ENCODE measurements at regions of chr2 and their contacts with region 1.

Region 1: DNA sequence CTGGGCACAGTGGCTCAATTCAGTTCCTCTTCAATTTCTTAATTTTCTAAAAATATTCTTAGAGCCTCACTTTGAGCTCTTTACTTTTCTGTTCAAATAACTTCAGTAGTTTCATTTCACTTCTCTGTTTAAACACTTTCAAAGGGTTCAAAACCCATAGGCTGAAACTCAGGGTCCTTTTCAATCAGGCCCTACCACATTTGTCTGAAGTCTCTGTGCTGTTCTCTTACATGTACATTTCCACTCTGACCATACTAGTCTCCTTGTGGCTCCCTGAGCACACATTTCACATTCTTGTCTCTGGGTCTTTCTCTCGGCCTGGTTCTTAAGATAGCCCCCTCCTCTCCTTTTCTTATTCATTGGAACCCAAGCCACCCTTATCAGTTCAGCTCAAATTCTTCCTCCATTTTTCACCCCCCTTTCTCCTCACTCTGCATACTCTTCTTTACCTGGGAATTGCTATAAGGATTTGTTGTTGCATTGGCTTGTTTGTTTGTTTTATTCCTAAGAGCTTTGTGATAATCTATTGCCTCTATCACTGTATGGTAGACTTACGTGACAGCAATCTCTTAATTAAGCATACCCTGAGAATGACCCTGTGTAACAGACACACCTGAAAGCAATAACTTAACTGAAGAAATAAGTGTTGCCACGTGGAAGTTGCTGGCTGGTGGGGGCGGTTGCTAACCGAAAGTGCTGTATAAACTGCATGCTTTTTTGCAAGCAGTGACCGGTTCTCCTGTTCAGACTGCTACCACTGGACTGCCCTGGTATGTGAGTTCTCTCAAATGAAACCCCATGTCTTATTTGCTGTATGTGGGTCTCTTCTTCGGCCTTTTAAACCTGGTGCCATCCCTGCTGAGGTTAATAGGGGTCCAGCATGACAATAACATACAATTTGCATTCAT is 27.7 kb upstream of the ACADL start:
- DNase-seq: no peak
- ATAC-seq: no peak
- H3K4me3 ChIP-seq: no peak overlapping the region
- H3K4me3 Mint-ChIP-seq: no peak overlapping the region
- H3K27ac ChIP-seq: no peak overlapping the region
- H3K27ac Mint-ChIP-seq: no peak overlapping the region
- H3K4me1 ChIP-seq: no peaks in the 10 kb centered on the region
- H3K4me1 Mint-ChIP-seq: no peaks in the 10 kb centered on the region
- H3K27me3 ChIP-seq: no peaks in the 10 kb centered on the region
- H3K27me3 Mint-ChIP-seq: peaks cover 2% of the 10 kb centered on the region
- CTCF ChIP-seq: no peak

Region 2: GRCh38 chr2:211157856-211158463 is 905.0 kb after region 1 on chr2:
- CTCF ChIA-PET with region 1: no interaction called
- POLR2A ChIA-PET with region 1: no interaction called
- intact Hi-C with region 1: loop called in 1 of 2 experiments (anchors 5 kb)
- DNase-seq: peak; percentile 8 to 69 (median 48)
- ATAC-seq: peak; percentile 48
- H3K4me3 ChIP-seq: no peak overlapping the region
- H3K4me3 Mint-ChIP-seq: no peak overlapping the region
- H3K27ac ChIP-seq: no peak overlapping the region
- H3K27ac Mint-ChIP-seq: no peak overlapping the region
- H3K4me1 ChIP-seq: no peaks in the 10 kb centered on the region
- H3K4me1 Mint-ChIP-seq: no peaks in the 10 kb centered on the region
- H3K27me3 ChIP-seq: no peaks in the 10 kb centered on the region
- H3K27me3 Mint-ChIP-seq: no peaks in the 10 kb centered on the region
- CTCF ChIP-seq: peak; percentile 77

Measured in CD8-positive, alpha-beta T cell (primary cell).